Panc1 (cell line): ENCODE measurements at regions of chrX and their contacts with region 1.

Region 1: GRCh38 chrX:40282946-40283674 is 185.4 kb upstream of the BCOR start:
- DNase-seq: no peak
- ATAC-seq: no peak
- H3K4me3 ChIP-seq: no peak overlapping the region
- H3K27ac ChIP-seq: no peak overlapping the region
- H3K4me1 ChIP-seq: no peaks in the 10 kb centered on the region
- H3K27me3 ChIP-seq: no peaks in the 10 kb centered on the region
- CTCF ChIP-seq: no peak

Region 2: GRCh38 chrX:40022421-40022820 is 260.7 kb before region 1 on chrX:
- CTCF ChIA-PET with region 1: no interaction called
- POLR2A ChIA-PET with region 1: interaction called, 15 read pairs
- in situ Hi-C with region 1: no loop called
- intact Hi-C with region 1: no loop called
- DNase-seq: no peak
- ATAC-seq: no peak
- H3K4me3 ChIP-seq: no peak overlapping the region
- H3K27ac ChIP-seq: no peak overlapping the region
- H3K4me1 ChIP-seq: no peaks in the 10 kb centered on the region
- H3K27me3 ChIP-seq: no peaks in the 10 kb centered on the region
- CTCF ChIP-seq: no peak

Region 3: DNA sequence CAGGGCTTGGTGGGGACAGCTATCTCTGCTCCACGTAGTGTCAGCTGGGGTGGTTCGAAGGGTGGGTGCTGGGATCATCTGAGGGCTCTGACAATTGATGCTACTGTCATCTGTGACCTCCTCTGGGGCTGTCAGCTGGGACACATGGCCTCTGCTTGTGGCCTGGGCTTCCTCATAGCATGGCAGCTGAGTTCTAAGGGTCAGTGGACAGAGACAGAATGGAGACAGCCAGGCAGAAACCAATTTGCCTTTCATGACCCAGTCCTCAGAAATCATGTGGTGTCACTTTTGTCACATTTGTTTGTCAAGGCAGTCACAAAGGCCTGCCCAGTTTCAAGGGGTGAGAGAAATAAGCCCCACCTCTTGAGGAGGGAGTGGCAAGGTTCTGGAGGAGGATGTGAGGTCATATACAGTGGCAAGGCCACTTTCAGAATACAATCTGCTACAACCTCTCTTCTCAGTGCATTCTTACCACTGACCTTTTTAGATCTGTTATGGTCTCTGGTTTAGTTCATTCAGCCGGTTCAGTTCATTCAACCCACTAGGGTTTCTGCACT is 81.7 kb before region 1 on chrX:
- CTCF ChIA-PET with region 1: no interaction called
- POLR2A ChIA-PET with region 1: interaction called, 12 read pairs
- in situ Hi-C with region 1: no loop called
- intact Hi-C with region 1: no loop called
- DNase-seq: no peak
- ATAC-seq: no peak
- H3K4me3 ChIP-seq: no peak overlapping the region
- H3K27ac ChIP-seq: no peak overlapping the region
- H3K4me1 ChIP-seq: no peaks in the 10 kb centered on the region
- H3K27me3 ChIP-seq: no peaks in the 10 kb centered on the region
- CTCF ChIP-seq: no peak